ENCODE measurements at regions of chr9 and their contacts with region 1.

Region 1: GRCh38 chr9:99221621-99222415 is at the starts of genes ALG2 and SEC61B:
- DNase-seq: peak; percentile 87 to 96 (median 90)
- ATAC-seq: peak; percentile 84
- H3K4me3 ChIP-seq: peak within 1 kb of the TSS; percentile 91
- H3K4me3 Mint-ChIP-seq: peak within 1 kb of the TSS; percentile 98
- H3K27ac ChIP-seq: peak within 1 kb of the TSS; percentile 89 to 95
- H3K27ac Mint-ChIP-seq: peak within 1 kb of the TSS; percentile 99
- H3K4me1 ChIP-seq: peaks cover 33% of the 10 kb centered on the region
- H3K4me1 Mint-ChIP-seq: peaks cover 81% of the 10 kb centered on the region
- H3K27me3 ChIP-seq: no peaks in the 10 kb centered on the region
- H3K27me3 Mint-ChIP-seq: no peaks in the 10 kb centered on the region
- CTCF ChIP-seq: no peak
- total RNA-seq, gene ALG2: 18.1 to 19.9 TPM
- total RNA-seq, gene SEC61B: 83.4 to 84.2 TPM

Region 2: DNA sequence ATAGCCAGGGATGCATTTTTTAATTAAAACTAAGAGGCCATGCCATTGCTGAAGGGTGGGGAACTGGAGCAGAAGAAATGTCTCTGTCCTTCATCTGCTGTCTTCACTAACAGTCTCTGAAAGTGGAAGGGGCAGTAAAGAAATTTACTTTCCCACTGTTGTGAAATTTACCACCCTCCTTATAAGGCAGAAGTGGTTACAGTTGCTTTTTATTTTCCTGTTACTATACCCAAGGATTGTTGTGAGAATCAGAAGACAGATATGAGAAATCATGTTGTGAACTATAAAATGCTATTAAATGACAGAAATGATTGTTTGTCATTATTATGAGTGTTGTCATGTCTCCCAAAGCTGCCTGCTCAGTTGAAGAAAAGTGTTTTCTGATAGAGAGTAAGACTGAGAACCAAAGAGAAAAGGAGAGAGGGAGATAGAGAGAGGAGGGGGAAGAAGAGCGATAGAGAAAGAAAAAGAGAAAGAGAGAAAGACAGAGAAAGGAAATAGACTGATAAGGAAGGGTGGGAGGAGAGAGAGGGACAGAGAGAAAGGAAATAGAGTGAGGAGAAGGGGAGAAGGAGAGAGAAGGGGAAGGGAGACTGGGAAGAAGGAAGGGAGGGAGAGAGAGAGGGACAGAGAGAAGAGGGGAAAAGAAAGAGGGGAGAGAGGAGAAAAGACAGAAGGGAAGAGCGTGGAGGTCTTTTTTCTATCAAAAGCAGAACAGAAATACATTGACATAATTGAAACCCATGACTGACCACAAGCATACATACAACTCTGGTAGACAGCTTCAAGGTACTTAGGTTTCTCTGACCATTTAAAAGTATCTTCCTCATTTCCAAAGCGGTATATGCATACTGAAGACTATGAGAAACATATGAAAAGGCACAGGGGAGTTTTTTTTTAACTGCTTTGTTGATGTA is 22.8 kb after region 1 on chr9:
- CTCF ChIA-PET with region 1: no interaction called
- POLR2A ChIA-PET with region 1: no interaction called
- intact Hi-C with region 1: no loop called
- DNase-seq: no peak
- ATAC-seq: no peak
- H3K4me3 ChIP-seq: no peak overlapping the region
- H3K4me3 Mint-ChIP-seq: no peak overlapping the region
- H3K27ac ChIP-seq: no peak overlapping the region
- H3K27ac Mint-ChIP-seq: no peak overlapping the region
- H3K4me1 ChIP-seq: no peaks in the 10 kb centered on the region
- H3K4me1 Mint-ChIP-seq: no peaks in the 10 kb centered on the region
- H3K27me3 ChIP-seq: no peaks in the 10 kb centered on the region
- H3K27me3 Mint-ChIP-seq: no peaks in the 10 kb centered on the region
- CTCF ChIP-seq: no peak

Region 3: GRCh38 chr9:99259231-99259918 is 37.6 kb after region 1 on chr9:
- CTCF ChIA-PET with region 1: no interaction called
- POLR2A ChIA-PET with region 1: interaction called, 19 read pairs
- intact Hi-C with region 1: no loop called
- DNase-seq: peak; percentile 9 to 69 (median 34)
- ATAC-seq: peak; percentile 97
- H3K4me3 ChIP-seq: peak overlapping the region; percentile 3
- H3K4me3 Mint-ChIP-seq: peak overlapping the region; percentile 65
- H3K27ac ChIP-seq: no peak overlapping the region
- H3K27ac Mint-ChIP-seq: peak overlapping the region; percentile 60
- H3K4me1 ChIP-seq: peaks cover 10% of the 10 kb centered on the region
- H3K4me1 Mint-ChIP-seq: peaks cover 19% of the 10 kb centered on the region
- H3K27me3 ChIP-seq: no peaks in the 10 kb centered on the region
- H3K27me3 Mint-ChIP-seq: no peaks in the 10 kb centered on the region
- CTCF ChIP-seq: no peak

Measured in CD4-positive, alpha-beta T cell (primary cell).